Ascending aorta (tissue), 2 donors: ENCODE measurements at regions of chr10 and their contacts with region 1.

Region 1: DNA sequence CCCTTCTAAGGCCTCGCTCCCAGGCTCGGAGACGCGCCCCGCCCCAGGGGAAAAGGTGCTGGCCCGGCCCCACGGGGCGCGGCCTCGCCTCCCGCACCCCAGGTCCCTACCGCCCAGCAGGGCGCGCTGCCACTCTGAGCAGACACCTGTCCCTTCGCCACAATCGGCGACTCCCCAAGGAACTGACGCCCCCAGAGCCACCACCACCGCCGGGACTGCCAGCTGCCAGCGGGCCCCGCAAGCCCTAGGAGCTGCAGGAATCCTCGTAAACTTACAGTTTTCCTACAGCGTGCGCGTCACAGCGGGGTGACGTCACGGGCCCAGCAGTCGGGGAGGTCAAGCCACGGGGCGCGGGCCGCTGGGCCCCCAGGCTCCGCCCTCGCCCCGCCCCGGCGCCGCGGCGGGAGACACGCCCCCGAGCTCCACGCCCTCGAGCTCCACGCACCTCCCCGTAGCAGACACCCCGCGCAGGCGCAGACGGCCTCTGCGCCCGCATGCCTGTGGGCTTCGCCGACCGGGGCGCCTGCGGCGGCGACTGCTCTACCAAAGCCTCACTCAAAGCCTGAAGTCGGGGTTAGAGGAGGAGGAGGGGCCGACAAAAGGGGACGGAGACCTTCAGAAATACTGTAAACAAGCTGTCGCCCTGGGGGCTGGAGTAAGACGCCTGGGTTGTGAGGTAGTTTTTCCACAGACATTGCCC is at the start of gene ZNF438:
- DNase-seq: peak; percentile 80 to 96
- H3K4me3 ChIP-seq: peak within 1 kb of the TSS; percentile 69 to 71
- H3K27ac ChIP-seq: peak within 1 kb of the TSS; percentile 98 to 99
- H3K4me1 ChIP-seq: peaks cover 6 to 25% of the 10 kb centered on the region in 2 donors
- H3K27me3 ChIP-seq: no peaks in the 10 kb centered on the region
- CTCF ChIP-seq: peak; percentile 58 to 89 (median 65)
- total RNA-seq, gene ZNF438: 1.7 TPM

Region 2: GRCh38 chr10:30783939-30784500 is 247.7 kb before region 1 on chr10:
- intact Hi-C with region 1: loop called (anchors 1 kb)
- DNase-seq: peak; percentile 37 to 92
- H3K4me3 ChIP-seq: peak overlapping the region; percentile 83 to 95
- H3K27ac ChIP-seq: peak overlapping the region; percentile 98
- H3K4me1 ChIP-seq: peaks cover 6 to 13% of the 10 kb centered on the region in 2 donors
- H3K27me3 ChIP-seq: no peaks in the 10 kb centered on the region
- CTCF ChIP-seq: peak; percentile 89 to 91 (median 90)

Region 3: GRCh38 chr10:30818010-30818531 is 213.6 kb before region 1 on chr10:
- intact Hi-C with region 1: loop called (anchors 2 kb)
- DNase-seq: peak; percentile 43 to 87
- H3K4me3 ChIP-seq: peak overlapping the region in 1 of 2 donors; percentile 67
- H3K27ac ChIP-seq: peak overlapping the region; percentile 90 to 94
- H3K4me1 ChIP-seq: peaks cover 6 to 45% of the 10 kb centered on the region in 2 donors
- H3K27me3 ChIP-seq: no peaks in the 10 kb centered on the region
- CTCF ChIP-seq: no peak

Region 4: DNA sequence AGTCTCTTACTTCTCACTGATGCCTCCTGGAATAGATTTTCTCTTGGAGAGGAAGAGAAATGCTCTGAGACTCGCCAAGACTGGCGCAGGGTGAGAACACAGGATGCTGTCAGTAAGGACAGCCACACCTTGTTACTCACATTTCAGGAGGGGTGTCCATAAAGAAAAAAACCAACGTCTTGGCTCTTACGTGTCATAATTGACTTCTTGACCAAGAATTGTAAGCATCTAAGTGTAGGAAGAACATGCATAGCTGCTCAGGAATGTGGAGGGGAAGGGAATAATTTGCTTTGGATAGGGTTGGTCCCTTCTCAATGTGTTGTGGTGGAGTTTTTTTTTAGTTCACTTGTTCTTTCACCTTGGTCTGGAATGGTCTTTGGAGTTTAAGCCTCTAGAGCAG is 43.7 kb after region 1 on chr10:
- intact Hi-C with region 1: loop called (anchors 1 kb)
- DNase-seq: no peak
- H3K4me3 ChIP-seq: no peak overlapping the region
- H3K27ac ChIP-seq: peak overlapping the region; percentile 82 to 94
- H3K4me1 ChIP-seq: peaks cover 13 to 46% of the 10 kb centered on the region in 2 donors
- H3K27me3 ChIP-seq: no peaks in the 10 kb centered on the region
- CTCF ChIP-seq: no peak

Region 5: DNA sequence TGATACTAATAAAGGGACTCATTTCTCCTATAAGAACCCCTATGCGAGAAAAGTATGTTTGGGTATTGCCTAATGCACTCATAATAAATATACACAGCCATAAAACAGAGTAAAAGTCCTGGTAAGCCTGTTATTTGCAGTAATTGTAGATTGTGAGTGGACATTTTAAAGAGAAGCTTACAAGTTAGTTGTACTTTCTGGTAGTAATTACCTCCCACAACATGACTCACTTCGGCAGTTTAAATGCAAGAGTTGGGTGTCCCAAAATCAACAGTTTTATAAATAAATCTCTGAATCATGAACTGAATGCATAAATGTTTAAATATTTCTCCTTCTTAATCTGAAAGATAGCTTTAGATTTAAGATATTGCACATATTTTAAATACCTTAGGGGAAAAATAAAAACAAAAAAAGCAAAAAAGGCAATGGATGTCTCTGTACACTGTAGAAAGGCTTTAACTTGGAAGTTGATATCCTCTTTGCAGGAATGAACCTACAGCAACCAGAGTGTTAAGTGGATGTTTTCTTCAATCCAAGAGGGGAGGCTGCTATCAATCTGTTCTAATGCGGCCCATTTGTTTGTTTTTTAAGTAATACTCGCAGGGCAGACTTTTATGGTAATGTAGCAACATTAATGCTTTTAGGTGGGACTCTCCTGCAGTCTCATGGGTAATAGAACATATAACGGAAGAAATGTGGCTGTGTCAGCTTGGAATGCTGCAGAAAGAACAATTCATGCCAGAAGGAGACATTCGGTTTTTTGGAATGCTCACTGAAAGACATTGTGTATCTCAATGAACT is 230.0 kb after region 1 on chr10:
- intact Hi-C with region 1: loop called (anchors 5 kb)
- DNase-seq: no peak
- H3K4me3 ChIP-seq: peak overlapping the region; percentile 21 to 41
- H3K27ac ChIP-seq: peak overlapping the region; percentile 67 to 71
- H3K4me1 ChIP-seq: peaks cover 0 to 17% of the 10 kb centered on the region in 2 donors
- H3K27me3 ChIP-seq: no peaks in the 10 kb centered on the region
- CTCF ChIP-seq: no peak

Region 6: DNA sequence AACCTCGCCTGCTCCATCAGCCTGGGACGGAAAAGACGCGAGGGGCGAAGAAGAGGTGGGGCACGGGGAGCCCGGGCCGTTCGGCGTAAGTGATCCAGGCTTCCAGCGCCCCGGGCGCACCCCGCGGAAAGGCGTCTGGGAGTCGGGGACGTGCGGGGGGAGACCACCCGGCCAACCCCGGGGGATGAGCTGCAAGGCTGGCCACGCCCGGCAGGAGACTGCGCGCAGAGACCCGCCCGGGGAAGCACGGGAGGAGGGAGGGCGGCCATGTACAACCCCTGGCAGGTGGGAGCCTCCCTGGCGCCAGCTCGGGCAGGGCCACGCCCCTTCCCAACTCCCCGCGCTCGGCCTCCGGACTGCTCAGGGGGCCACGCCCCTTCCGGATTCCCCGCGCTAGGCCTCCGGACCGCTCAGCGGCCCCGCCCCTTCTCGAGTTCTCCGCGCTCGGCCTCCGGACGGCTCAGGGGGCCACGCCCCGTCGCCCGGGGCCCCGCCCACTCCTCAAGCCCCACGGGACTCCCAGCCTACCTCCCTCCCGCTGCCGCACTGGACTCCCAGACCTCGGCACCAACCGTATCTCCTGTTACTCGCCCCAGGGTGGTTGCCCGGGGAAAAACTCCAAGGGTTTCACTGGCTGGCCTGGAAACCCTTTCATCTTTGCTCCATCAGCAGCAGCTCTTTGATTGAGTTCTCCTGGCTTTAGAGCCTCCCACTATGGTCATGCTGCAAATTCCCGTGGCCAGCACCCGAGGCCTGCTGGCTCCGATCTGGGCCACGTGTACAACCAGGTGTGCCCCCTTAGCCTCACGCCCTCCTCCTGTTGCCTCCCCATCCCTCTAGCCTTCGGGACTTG is 571.8 kb after region 1 on chr10:
- intact Hi-C with region 1: loop called (anchors 1 kb)
- DNase-seq: peak; percentile 85 to 97
- H3K4me3 ChIP-seq: peak overlapping the region; percentile 65 to 80
- H3K27ac ChIP-seq: peak overlapping the region; percentile 87 to 89
- H3K4me1 ChIP-seq: no peaks in the 10 kb centered on the region
- H3K27me3 ChIP-seq: no peaks in the 10 kb centered on the region
- CTCF ChIP-seq: peak in 1 of 3 experiments; percentile 6

Region 7: DNA sequence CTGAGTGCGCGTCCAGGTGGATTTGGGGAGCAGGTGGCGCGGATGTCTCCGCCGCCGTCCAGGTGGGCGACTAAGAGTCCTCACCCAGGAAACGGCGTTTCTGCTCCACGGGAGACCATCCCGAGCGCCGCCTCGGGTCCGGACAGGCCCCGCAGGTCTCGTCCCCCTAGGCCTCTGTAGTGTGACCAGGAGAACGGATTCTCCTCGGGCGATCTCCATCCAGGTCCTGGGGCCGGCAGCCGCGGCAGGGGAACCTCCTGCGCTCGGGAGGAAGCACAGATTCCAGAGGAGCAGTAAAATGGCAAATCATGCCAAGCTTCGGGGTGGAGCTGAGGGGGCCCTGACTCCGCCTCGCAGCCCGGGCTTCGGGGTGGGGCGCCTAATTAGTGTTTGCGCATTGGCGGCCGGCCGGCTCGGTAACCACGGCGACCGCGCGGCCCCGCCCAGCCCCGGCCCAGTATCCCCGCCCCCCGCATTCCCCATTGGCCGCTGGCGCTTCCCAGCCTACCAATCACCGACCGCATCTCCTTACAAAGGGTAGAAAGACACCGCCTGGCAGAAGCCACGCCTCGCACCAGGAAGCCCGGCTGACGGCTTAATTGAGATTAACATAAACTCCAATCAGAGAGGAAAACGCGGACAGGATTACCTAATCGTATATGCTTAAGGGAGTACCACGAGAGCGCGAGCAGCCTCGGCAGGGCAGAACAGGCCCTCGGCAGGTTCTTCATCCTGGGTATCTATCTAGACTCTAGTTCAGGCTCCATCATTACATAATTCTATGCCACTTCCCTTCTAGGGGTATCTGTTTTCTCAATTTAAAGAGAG is 728.3 kb after region 1 on chr10:
- intact Hi-C with region 1: loop called (anchors 2 kb)
- DNase-seq: peak; percentile 95 to 98
- H3K4me3 ChIP-seq: peak overlapping the region; percentile 81 to 84
- H3K27ac ChIP-seq: peak overlapping the region; percentile 92 to 98
- H3K4me1 ChIP-seq: peaks cover 9 to 18% of the 10 kb centered on the region in 2 donors
- H3K27me3 ChIP-seq: no peaks in the 10 kb centered on the region
- CTCF ChIP-seq: no peak